ENCODE measurements at regions of chr10 and their contacts with region 1.

Region 1: DNA sequence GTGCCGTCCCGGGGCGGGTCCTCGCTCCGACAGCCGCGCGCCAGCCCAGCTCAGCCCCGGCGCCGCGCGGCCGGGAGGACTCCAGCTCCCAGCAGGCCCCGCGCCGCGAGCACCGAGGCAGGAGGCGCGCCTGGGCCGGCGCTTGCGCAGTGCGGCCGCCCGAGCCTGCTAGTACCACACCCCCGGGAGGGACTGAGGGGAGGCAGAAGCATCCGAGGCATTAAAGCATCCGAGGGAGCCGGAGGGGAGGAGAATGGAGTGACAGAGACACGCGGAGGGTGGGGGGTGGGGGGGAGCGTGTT is at the start of gene GRK5:
- DNase-seq: peak; percentile 89 to 99 (median 96)
- ATAC-seq: peak; percentile 82
- H3K4me3 ChIP-seq: peak within 1 kb of the TSS; percentile 68
- H3K4me3 Mint-ChIP-seq: peak within 1 kb of the TSS; percentile 99
- H3K27ac ChIP-seq: peak within 1 kb of the TSS; percentile 70 to 88
- H3K27ac Mint-ChIP-seq: peak within 1 kb of the TSS; percentile 89
- H3K4me1 ChIP-seq: peaks cover 40% of the 10 kb centered on the region
- H3K4me1 Mint-ChIP-seq: peaks cover 46% of the 10 kb centered on the region
- H3K27me3 ChIP-seq: no peaks in the 10 kb centered on the region
- H3K27me3 Mint-ChIP-seq: no peaks in the 10 kb centered on the region
- CTCF ChIP-seq: no peak
- total RNA-seq, gene GRK5: 19.2 to 20.8 TPM

Region 2: GRCh38 chr10:119165171-119166110 is 41.9 kb before region 1 on chr10 and contains the start of gene SFXN4:
- CTCF ChIA-PET with region 1: interaction called, 6 read pairs
- POLR2A ChIA-PET with region 1: interaction called, 5 read pairs
- intact Hi-C with region 1: loop called in 1 of 2 experiments (anchors 1 kb)
- DNase-seq: peak; percentile 59 to 91 (median 74)
- ATAC-seq: peak; percentile 94
- H3K4me3 ChIP-seq: peak within 1 kb of the TSS; percentile 92
- H3K4me3 Mint-ChIP-seq: peak within 1 kb of the TSS; percentile 94
- H3K27ac ChIP-seq: peak within 1 kb of the TSS; percentile 50 to 75
- H3K27ac Mint-ChIP-seq: peak within 1 kb of the TSS; percentile 90
- H3K4me1 ChIP-seq: peaks cover 24% of the 10 kb centered on the region
- H3K4me1 Mint-ChIP-seq: peaks cover 49% of the 10 kb centered on the region
- H3K27me3 ChIP-seq: no peaks in the 10 kb centered on the region
- H3K27me3 Mint-ChIP-seq: no peaks in the 10 kb centered on the region
- CTCF ChIP-seq: no peak
- total RNA-seq, gene SFXN4: 7.1 to 7.8 TPM

Region 3: GRCh38 chr10:119243488-119243887 is 36.2 kb after region 1 on chr10:
- CTCF ChIA-PET with region 1: interaction called, 3 read pairs
- POLR2A ChIA-PET with region 1: no interaction called
- intact Hi-C with region 1: loop called in 1 of 2 experiments (anchors 5 kb)
- DNase-seq: no peak
- ATAC-seq: no peak
- H3K4me3 ChIP-seq: no peak overlapping the region
- H3K4me3 Mint-ChIP-seq: no peak overlapping the region
- H3K27ac ChIP-seq: no peak overlapping the region
- H3K27ac Mint-ChIP-seq: no peak overlapping the region
- H3K4me1 ChIP-seq: no peaks in the 10 kb centered on the region
- H3K4me1 Mint-ChIP-seq: peaks cover 22% of the 10 kb centered on the region
- H3K27me3 ChIP-seq: no peaks in the 10 kb centered on the region
- H3K27me3 Mint-ChIP-seq: no peaks in the 10 kb centered on the region
- CTCF ChIP-seq: no peak

Region 4: DNA sequence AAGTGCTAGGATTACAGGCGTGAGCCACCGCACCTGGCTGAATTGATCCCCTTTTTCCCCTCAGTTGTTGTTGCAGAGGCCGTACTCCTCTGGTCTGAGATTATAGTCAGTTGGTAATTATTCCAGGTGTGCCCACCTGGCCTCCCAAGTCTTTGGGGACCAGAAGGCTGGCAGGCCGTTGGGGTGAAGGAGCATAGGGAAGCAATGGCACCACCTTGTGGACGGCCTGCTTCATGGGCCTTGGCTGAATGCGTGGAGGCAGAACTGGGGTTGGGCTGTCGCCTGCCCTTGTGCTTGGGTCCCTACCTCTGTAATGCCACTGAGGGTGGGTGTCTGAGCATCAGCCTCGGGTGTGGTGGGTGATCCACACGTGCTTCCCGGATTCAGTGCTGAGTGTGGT is 209.5 kb after region 1 on chr10:
- CTCF ChIA-PET with region 1: interaction called, 18 read pairs
- POLR2A ChIA-PET with region 1: interaction called, 5 read pairs
- intact Hi-C with region 1: loop called (anchors 1 kb)
- DNase-seq: peak; percentile 55 to 84 (median 62)
- ATAC-seq: peak; percentile 86
- H3K4me3 ChIP-seq: no peak overlapping the region
- H3K4me3 Mint-ChIP-seq: no peak overlapping the region
- H3K27ac ChIP-seq: no peak overlapping the region
- H3K27ac Mint-ChIP-seq: no peak overlapping the region
- H3K4me1 ChIP-seq: no peaks in the 10 kb centered on the region
- H3K4me1 Mint-ChIP-seq: no peaks in the 10 kb centered on the region
- H3K27me3 ChIP-seq: no peaks in the 10 kb centered on the region
- H3K27me3 Mint-ChIP-seq: no peaks in the 10 kb centered on the region
- CTCF ChIP-seq: peak; percentile 63

Region 5: DNA sequence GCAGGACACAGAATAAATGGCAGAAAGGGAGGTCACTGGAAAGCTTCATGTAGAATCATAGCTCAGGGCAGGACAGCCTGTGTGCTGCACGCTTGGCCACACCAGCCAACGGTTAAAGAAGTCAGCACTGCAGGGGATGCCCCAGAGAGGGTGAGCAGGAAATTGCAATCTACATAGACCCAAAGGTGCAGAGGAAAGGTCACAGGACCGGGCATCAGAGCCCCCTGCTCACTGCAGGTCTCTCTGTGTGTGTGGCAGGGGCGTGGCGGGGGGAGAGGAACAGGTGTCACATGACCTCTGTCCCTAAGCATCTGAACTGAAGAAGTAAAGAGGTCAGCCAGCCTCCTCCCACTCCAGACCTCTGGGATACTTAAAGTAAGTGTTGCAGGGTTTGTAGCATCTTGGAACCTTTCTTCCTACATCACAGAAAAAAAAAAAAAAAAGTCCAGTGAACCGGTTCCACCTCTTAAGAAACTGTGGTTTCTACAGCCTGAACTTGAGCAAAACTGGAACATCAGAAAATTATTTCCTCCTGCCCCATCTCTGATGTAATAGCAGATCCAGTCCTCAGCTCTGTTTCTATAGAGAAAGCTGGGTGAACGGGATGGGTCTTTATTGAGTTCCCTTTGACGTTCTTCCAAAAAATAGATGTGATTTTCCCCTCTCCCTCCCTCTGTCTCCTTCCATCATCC is 270.9 kb after region 1 on chr10:
- CTCF ChIA-PET with region 1: no interaction called
- POLR2A ChIA-PET with region 1: no interaction called
- intact Hi-C with region 1: no loop called
- DNase-seq: peak in 6 of 14 experiments; percentile 7 to 55 (median 44)
- ATAC-seq: peak; percentile 51
- H3K4me3 ChIP-seq: no peak overlapping the region
- H3K4me3 Mint-ChIP-seq: peak overlapping the region; percentile 55
- H3K27ac ChIP-seq: peak overlapping the region in 1 of 2 donors; percentile 7
- H3K27ac Mint-ChIP-seq: peak overlapping the region; percentile 35
- H3K4me1 ChIP-seq: peaks cover 31% of the 10 kb centered on the region
- H3K4me1 Mint-ChIP-seq: peaks cover 34% of the 10 kb centered on the region
- H3K27me3 ChIP-seq: no peaks in the 10 kb centered on the region
- H3K27me3 Mint-ChIP-seq: no peaks in the 10 kb centered on the region
- CTCF ChIP-seq: no peak

Region 6: GRCh38 chr10:119542988-119543813 is 335.9 kb after region 1 on chr10:
- CTCF ChIA-PET with region 1: interaction called, 14 read pairs
- POLR2A ChIA-PET with region 1: interaction called, 22 read pairs
- intact Hi-C with region 1: loop called in 1 of 2 experiments (anchors 2 kb)
- DNase-seq: peak; percentile 47 to 85 (median 63)
- ATAC-seq: peak; percentile 48
- H3K4me3 ChIP-seq: peak overlapping the region; percentile 92
- H3K4me3 Mint-ChIP-seq: peak overlapping the region; percentile 98
- H3K27ac ChIP-seq: peak overlapping the region in 1 of 2 donors; percentile 84
- H3K27ac Mint-ChIP-seq: peak overlapping the region; percentile 88
- H3K4me1 ChIP-seq: peaks cover 40% of the 10 kb centered on the region
- H3K4me1 Mint-ChIP-seq: peaks cover 41% of the 10 kb centered on the region
- H3K27me3 ChIP-seq: no peaks in the 10 kb centered on the region
- H3K27me3 Mint-ChIP-seq: no peaks in the 10 kb centered on the region
- CTCF ChIP-seq: peak; percentile 85

Region 7: GRCh38 chr10:119859420-119860258 is 652.3 kb after region 1 on chr10:
- CTCF ChIA-PET with region 1: no interaction called
- POLR2A ChIA-PET with region 1: no interaction called
- intact Hi-C with region 1: loop called in 1 of 2 experiments (anchors 10 kb)
- DNase-seq: peak in 3 of 14 experiments; percentile 65 to 73 (median 72)
- ATAC-seq: peak; percentile 60
- H3K4me3 ChIP-seq: no peak overlapping the region
- H3K4me3 Mint-ChIP-seq: no peak overlapping the region
- H3K27ac ChIP-seq: no peak overlapping the region
- H3K27ac Mint-ChIP-seq: peak overlapping the region; percentile 4
- H3K4me1 ChIP-seq: peaks cover 4% of the 10 kb centered on the region
- H3K4me1 Mint-ChIP-seq: peaks cover 46% of the 10 kb centered on the region
- H3K27me3 ChIP-seq: no peaks in the 10 kb centered on the region
- H3K27me3 Mint-ChIP-seq: no peaks in the 10 kb centered on the region
- CTCF ChIP-seq: peak; percentile 88